HEK293T (cell line): ENCODE measurements at regions of chrX and their contacts with region 1.

Region 1: DNA sequence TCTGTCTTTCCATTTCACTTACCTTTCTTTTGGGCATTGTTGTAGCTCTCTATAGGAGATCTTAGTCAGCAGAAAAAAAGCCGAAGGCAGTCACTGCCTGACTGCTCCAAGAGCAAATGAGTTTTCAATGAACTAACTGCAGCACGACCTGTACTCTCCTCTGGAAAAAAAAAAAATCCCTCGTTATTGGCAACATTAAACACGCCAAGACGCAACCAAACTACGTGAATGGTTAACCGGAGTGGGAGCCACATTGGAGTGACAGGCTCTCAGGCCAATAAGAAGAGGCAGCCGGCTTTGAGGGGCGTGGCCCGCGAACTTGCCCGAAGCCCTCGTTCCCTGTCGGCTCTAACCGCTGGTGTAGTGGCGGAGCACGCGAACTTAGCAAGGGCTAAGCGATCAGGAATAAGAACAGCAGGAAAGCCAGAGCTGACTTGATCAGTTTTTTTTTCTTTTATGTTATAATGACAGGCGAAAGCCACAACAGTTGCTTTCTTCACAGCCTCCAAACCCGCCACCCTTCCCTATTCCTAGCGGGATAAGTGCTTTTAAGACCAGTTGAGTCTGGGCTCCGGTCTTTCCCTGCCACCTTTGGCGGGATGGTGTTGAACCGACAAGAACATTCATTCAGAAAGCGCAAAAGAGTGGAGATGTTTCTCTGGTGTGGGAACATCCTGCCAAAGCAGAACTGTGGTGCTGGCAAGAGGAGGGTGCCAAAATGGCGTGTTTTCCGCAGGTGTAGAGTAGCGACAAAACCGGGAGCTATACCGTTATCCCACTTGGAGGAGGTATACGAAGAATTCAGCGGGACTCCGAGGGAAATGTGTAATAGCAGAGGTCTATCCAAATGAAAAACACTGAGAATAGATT is 80.0 kb downstream of the HMGN5 start:
- DNase-seq: peak; percentile 86

Region 2: DNA sequence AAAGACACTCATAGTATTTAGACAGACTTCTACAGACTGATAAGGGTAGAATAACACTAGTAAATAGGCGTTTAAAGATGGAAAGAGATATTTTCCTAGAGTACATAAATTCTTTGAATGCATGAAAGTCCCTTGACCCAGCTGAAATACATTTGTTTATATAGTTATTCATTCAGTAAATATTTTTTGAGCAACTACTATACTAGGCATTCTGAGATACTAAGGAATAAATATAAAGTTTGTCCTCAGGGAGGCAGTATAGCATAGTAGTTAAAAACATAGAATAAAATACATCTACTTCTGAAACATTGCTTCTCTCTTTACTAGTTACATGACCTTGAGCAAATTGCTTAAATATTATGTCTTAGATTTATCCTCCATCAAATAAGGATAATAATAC is 52.5 kb after region 1 on chrX:
- CTCF ChIA-PET with region 1: no interaction called
- POLR2A ChIA-PET with region 1: no interaction called
- DNase-seq: peak; percentile 9

Region 3: GRCh38 chrX:81201671-81202455 is 80.1 kb after region 1 on chrX and contains the starts of genes HMGN5 and SH3BGRL:
- CTCF ChIA-PET with region 1: interaction called, 9 read pairs
- POLR2A ChIA-PET with region 1: interaction called, 11 read pairs
- DNase-seq: peak; percentile 67